Prostate gland (tissue), 2 donors: ENCODE measurements at regions of chr5 and their contacts with region 1.

Region 1: DNA sequence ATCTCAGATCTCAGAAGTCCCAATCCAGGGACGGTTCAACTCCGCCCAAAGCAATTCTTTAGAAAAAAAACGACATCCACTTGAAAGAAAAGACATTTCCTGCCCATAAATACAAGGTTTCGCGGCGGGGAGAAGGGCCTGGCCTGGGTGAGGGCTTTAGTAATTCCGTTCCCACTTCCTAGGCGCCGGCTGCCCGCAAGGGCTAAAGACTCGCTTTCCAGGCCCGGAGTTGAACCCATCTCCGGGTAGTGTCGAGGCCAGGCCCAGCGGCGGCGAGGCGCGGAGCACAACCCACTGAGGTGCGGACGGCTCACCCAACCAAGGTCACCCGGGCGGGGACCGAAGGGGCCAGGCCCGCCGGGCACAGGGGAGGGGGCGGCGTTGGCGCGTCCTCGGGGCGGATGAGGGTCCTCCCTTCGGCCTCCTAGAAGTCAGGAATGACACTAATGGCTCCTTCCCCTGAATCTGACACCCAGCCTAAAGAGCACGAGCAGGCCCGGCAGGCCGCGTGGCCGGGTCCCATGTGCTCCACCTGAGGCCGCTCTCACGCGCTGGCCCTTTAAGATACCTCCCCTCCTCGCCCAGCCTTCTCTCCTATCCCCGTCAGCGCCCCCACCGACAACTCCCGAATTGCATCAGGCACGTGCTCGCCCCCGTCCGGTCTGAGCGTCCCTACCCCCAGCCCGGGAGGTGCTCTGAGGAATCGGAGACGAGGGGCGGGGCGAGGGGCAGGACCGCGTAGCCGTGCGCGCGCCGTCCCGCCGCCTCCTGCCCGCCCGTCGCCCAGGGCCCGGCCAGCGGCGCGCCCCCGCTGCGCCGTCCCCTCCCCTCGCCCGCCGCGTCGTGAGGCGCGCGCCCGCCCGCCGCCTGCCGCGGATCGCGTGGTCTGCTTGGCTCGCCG is 467 bp upstream of the LARP1 start:
- DNase-seq: peak; percentile 100
- H3K4me3 ChIP-seq: peak overlapping the region; percentile 83 to 90
- H3K27ac ChIP-seq: peak overlapping the region; percentile 95 to 96
- H3K4me1 ChIP-seq: peaks cover 16% of the 10 kb centered on the region
- H3K27me3 ChIP-seq: no peaks in the 10 kb centered on the region
- CTCF ChIP-seq: peak in 3 of 4 experiments; percentile 28 to 70 (median 53)
- POLR2A ChIP-seq: peak; percentile 68

Region 2: DNA sequence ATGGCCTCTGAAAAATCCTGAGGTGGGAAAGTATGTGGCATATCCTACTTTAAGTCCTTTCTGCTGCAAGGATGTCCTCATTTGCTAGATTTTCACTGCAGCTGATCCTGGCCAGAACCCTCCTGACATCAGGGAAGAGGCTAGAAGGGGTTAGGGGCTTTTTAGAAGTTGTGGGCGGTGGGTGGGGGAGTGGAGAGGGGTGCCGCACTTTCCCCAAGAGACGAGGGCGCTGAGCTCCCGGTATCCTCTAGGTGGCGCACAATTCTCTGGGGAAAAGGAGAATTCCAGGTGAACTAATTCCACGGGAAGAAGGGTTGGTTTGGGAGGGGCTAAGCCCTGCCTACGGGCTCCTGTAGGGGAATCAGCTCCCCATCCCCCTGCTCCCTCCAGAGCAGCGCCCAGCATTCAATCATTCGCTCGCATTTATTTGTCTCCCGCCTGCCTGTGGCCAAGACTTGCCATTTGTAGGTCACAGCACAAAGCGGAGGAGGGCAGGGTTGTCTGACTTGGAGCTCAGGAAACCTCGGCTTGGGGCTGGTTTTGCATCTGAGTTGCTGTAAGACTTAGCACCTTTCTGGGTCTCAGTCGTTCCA is 233.8 kb before region 1 on chr5:
- intact Hi-C with region 1: no loop called
- DNase-seq: no peak
- H3K4me3 ChIP-seq: no peak overlapping the region
- H3K27ac ChIP-seq: no peak overlapping the region
- H3K4me1 ChIP-seq: no peaks in the 10 kb centered on the region
- H3K27me3 ChIP-seq: peaks cover 5% of the 10 kb centered on the region
- CTCF ChIP-seq: peak in 3 of 4 experiments; percentile 23 to 39 (median 26)
- POLR2A ChIP-seq: no peak

Region 3: DNA sequence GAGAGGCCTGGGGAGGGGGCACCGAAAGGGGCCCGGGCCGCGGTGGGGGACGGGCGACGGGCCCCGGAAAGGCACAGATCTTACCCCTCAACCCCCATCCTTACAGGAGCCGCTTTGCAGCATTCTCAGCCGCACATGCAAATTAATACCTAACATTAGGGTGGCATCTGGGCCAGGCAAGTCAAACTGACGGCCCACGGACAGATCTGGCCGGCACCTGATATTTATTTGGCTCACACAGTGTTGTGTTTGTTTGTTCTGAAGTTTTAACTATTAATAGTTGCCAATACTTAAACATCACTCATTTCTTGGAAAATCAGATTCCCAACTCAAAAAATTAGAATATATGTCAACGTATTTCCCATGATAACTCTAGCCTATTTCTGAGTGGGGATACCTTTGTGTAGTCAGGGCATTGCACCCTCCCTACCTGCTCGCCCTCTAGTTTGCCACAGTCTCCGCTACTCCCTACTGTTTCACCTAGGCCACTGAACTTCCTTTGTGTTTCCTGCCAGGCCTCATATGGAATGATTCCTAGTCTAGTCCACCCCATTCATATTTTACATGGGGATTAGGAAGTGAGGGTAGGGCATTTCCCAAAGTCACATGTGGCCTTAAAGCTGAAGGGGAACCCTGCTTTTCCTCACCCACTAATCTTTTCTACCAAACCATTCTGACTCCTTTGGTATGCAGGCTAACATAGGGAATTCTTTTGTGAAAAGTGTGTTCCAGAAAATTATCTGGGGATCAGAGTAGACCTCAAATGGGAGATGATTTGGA is 71.4 kb before region 1 on chr5:
- intact Hi-C with region 1: loop called (anchors 2 kb)
- DNase-seq: no peak
- H3K4me3 ChIP-seq: peak overlapping the region; percentile 40 to 44
- H3K27ac ChIP-seq: peak overlapping the region; percentile 73 to 83
- H3K4me1 ChIP-seq: no peaks in the 10 kb centered on the region
- H3K27me3 ChIP-seq: no peaks in the 10 kb centered on the region
- CTCF ChIP-seq: no peak
- POLR2A ChIP-seq: no peak

Region 4: GRCh38 chr5:154857530-154858296 is 103.0 kb after region 1 on chr5:
- intact Hi-C with region 1: loop called (anchors 1 kb)
- DNase-seq: peak; percentile 92
- H3K4me3 ChIP-seq: peak overlapping the region; percentile 75 to 82
- H3K27ac ChIP-seq: peak overlapping the region; percentile 97 to 98
- H3K4me1 ChIP-seq: peaks cover 6% of the 10 kb centered on the region
- H3K27me3 ChIP-seq: no peaks in the 10 kb centered on the region
- CTCF ChIP-seq: peak in 2 of 4 experiments; percentile 19 to 28
- POLR2A ChIP-seq: peak; percentile 69

Region 5: GRCh38 chr5:154940772-154941620 is 186.3 kb after region 1 on chr5 and contains the start of gene MRPL22:
- intact Hi-C with region 1: loop called (anchors 10 kb)
- DNase-seq: peak; percentile 89
- H3K4me3 ChIP-seq: peak within 1 kb of the TSS; percentile 55 to 56
- H3K27ac ChIP-seq: peak within 1 kb of the TSS; percentile 59 to 66
- H3K4me1 ChIP-seq: peaks cover 7% of the 10 kb centered on the region
- H3K27me3 ChIP-seq: no peaks in the 10 kb centered on the region
- CTCF ChIP-seq: peak in 2 of 4 experiments; percentile 40 to 44
- POLR2A ChIP-seq: peak; percentile 60
- total RNA-seq, gene MRPL22: 14.4 to 35.2 TPM